PC-9 (cell line): ENCODE measurements at regions of chr3 and their contacts with region 1.

Region 1: DNA sequence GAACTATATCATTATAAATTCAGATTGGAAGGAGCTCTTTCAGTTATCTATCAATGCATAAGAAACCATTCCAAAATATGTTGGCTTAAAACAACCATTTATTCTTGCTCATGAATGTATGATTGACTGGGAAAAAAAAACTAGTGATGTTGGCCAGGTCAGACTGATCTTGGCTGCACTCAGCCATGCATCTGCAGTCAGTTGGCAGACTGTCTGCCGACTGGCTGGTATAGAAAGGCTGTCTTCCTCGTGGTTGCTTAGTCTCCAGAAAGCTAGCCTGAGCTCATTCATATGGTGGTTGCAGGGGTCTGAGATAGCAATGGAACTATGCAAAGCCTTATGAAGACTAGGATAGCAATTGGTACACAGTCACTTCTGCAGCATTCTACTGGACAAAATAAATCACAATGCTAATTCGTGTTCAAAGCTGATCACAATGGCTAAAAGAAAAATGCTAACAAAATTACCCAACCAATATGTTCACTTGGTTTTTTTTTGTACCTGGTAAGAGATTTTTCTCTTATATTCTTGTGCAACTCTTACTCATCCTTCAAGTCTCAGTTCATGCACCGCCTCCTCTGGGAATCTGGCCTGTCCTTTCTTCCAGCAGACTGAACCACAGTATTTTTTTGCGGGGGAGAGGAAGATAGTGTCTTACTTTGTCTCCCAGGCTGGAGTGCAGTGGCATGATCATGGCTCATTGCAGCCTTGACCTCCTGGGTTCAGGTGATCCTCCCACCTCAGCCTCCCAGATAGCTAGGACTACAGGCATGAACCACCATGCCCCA is 126.8 kb downstream of the KCNAB1 start:
- DNase-seq: no peak
- H3K4me3 ChIP-seq: no peak overlapping the region
- H3K27ac ChIP-seq: no peak overlapping the region
- H3K4me1 ChIP-seq: no peaks in the 10 kb centered on the region
- H3K27me3 ChIP-seq: no peaks in the 10 kb centered on the region
- CTCF ChIP-seq: no peak

Region 2: DNA sequence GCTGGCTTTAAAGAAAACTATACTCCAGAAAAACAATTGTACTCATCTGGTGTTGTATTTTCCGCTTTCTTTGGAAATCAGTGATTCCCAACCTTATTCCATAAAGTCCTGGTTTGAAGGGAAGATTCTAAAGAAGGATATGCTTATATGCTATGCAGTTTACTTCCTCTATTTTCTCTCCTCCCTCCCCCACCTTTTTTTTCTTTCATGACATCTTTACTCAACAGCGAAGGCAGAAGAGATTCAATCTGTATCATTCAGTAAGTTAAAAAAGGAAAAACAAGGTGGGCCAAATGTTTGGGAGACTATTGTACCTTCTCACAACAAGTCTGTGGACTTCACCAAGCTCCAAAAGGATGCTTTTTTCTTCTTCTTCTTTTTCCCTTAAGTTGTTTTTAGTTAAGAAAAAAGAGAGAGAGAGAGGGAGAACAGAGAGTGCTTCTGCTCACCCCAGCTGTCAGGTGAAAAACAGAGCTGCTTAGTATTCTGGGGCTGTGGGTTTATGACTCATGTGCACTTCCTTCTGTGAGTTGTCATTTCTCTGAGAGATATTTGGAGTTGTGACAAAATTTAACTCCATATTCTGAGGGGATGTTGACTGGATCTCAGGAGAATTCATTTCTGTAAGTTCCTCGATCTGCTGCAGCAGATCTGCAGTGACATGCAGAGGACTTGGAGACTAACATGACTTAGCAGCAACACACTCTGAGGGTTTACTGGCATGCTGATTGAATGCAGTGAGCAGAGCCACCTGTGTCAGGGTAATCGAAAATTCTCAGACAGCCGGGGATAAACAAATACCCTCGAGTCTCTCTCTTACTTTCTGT is 237.0 kb after region 1 on chr3:
- CTCF ChIA-PET with region 1: interaction called, 13 read pairs
- POLR2A ChIA-PET with region 1: no interaction called
- intact Hi-C with region 1: no loop called
- DNase-seq: peak; percentile 16 to 60
- H3K4me3 ChIP-seq: no peak overlapping the region
- H3K27ac ChIP-seq: 0 out of 2 replicates have a peak overlapping the region, but pooled peaks have one; percentile 15
- H3K4me1 ChIP-seq: peaks cover 21% of the 10 kb centered on the region
- H3K27me3 ChIP-seq: no peaks in the 10 kb centered on the region
- CTCF ChIP-seq: no peak